ENCODE measurements at regions of chr7 and their contacts with region 1.

Region 1: DNA sequence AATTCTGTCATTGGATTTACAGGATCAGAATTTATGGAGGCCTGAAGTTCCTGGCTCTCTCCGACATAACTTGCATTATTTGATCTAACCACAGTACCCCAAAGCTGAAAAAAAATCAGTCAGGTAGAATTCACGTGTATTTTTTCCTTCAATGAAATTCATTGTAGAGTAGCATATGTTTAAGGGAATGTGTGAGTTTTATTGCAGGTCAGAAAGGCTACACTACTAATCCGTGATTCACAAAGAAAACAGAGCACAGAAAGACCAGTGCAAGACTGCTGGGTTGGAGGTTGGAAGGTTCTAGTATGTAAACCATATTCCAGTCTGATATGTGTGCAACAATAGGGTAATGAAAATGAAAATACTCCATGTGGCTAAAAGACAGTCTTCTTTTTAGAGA is 247.0 kb upstream of the FERD3L start:
- DNase-seq: peak; percentile 84
- ATAC-seq: peak; percentile 100
- H3K4me3 ChIP-seq: no peak overlapping the region
- H3K27ac ChIP-seq: peak overlapping the region; percentile 13; the same call in 1 of the 2 replicates
- H3K4me1 ChIP-seq: peaks cover 16% of the 10 kb centered on the region
- H3K27me3 ChIP-seq: no peaks in the 10 kb centered on the region
- CTCF ChIP-seq: no peak

Region 2: DNA sequence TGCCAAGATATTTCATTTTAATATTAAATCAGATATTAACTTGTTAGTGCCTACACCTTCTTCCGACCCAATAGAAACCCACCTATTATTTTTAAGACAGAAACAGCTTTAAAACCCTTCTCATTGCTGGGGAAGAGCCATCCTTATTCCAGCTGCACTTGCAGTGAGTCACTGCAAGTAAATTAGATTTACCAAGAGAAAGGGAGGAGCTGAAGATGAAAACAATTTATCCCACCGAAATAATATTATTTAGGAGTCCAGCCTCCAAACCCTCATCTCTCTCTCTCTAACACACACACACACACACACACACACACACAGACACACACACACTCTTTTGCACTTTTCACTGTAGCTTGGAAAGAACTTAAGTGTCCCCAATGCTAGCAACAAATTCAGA is 301.7 kb before region 1 on chr7:
- CTCF ChIA-PET with region 1: no interaction called
- POLR2A ChIA-PET with region 1: no interaction called
- intact Hi-C with region 1: no loop called
- DNase-seq: no peak
- ATAC-seq: no peak
- H3K4me3 ChIP-seq: no peak overlapping the region
- H3K27ac ChIP-seq: no peak overlapping the region
- H3K4me1 ChIP-seq: no peaks in the 10 kb centered on the region
- H3K27me3 ChIP-seq: no peaks in the 10 kb centered on the region
- CTCF ChIP-seq: no peak

Region 3: GRCh38 chr7:19224951-19225350 is 167.3 kb before region 1 on chr7:
- CTCF ChIA-PET with region 1: no interaction called
- POLR2A ChIA-PET with region 1: no interaction called
- intact Hi-C with region 1: loop called (anchors 5 kb)
- DNase-seq: no peak
- ATAC-seq: no peak
- H3K4me3 ChIP-seq: no peak overlapping the region
- H3K27ac ChIP-seq: no peak overlapping the region
- H3K4me1 ChIP-seq: no peaks in the 10 kb centered on the region
- H3K27me3 ChIP-seq: no peaks in the 10 kb centered on the region
- CTCF ChIP-seq: no peak

Region 4: GRCh38 chr7:19377611-19378344 is 14.5 kb before region 1 on chr7:
- CTCF ChIA-PET with region 1: no interaction called
- POLR2A ChIA-PET with region 1: no interaction called
- intact Hi-C with region 1: no loop called
- DNase-seq: peak; percentile 19
- ATAC-seq: peak; percentile 82
- H3K4me3 ChIP-seq: no peak overlapping the region
- H3K27ac ChIP-seq: no peak overlapping the region
- H3K4me1 ChIP-seq: no peaks in the 10 kb centered on the region; the same call in 1 of the 2 replicates
- H3K27me3 ChIP-seq: no peaks in the 10 kb centered on the region
- CTCF ChIP-seq: no peak

Measured in PC-3 (cell line).